A549 (cell line): ENCODE measurements at regions of chr5 and their contacts with region 1.

Region 1: GRCh38 chr5:154647114-154647760 is 107.9 kb upstream of the LARP1 start:
- DNase-seq: no peak
- ATAC-seq: peak in 1 of 2 experiments; percentile 21; a peak in 2 of 6 replicates
- H3K4me3 ChIP-seq: no peak overlapping the region
- H3K27ac ChIP-seq: no peak overlapping the region
- H3K4me1 ChIP-seq: no peaks in the 10 kb centered on the region
- CTCF ChIP-seq: no peak
- EP300 ChIP-seq: no peak
- POLR2A ChIP-seq: no peak
- RAD21 ChIP-seq: no peak

Region 2: DNA sequence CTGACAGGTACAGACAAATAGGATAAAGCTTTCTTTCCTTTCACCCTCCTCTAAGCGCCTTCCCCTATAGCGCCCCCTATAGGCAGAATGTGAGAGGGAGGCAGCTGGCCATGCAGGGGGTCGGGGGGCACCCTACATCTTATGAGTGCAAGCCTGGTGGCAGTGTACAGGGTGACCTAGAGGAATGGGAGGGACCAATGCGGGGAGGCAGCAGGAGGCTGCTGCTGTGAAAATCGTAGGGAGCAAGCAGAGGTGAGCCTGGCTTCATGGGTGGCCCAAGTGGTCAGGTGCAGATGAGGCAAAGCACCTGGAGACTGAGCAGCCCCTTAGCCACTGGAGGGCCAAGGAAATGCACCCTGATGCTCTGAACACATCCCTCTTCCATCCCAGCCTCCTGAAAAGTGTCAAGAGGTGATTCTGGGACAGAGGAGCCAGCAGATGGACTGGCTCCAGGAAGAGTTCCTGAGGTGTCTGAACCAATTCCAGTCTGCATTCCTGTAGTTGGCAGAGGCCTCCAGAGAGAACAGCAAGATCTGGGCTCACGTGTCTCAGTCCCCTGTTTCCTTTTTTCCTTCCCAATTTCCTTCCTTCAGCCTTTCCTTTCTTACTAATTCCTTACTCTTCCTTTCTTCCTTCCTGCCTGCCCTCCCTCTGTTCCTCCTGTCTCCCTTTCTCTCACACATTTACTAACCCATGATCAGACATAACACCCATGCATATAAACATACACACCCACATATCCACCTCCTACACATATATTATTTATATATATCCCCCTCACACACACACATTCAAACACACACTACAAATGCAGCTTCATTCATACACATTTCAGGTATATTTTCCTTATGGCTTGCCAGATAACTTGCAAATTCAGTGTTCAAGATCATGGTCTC is 489.5 kb before region 1 on chr5:
- CTCF ChIA-PET with region 1: no interaction called
- POLR2A ChIA-PET with region 1: no interaction called
- DNase-seq: no peak
- ATAC-seq: peak; percentile 52 to 54; a peak in 5 of 6 replicates
- H3K4me3 ChIP-seq: no peak overlapping the region
- H3K27ac ChIP-seq: no peak overlapping the region
- H3K4me1 ChIP-seq: peaks cover 4% of the 10 kb centered on the region; the same call in 1 of the 3 replicates
- CTCF ChIP-seq: peak; percentile 41
- EP300 ChIP-seq: no peak
- POLR2A ChIP-seq: no peak
- RAD21 ChIP-seq: no peak

Region 3: GRCh38 chr5:154664869-154665268 is 17.6 kb after region 1 on chr5:
- CTCF ChIA-PET with region 1: interaction called, 30 read pairs
- POLR2A ChIA-PET with region 1: no interaction called
- DNase-seq: no peak
- ATAC-seq: no peak
- H3K4me3 ChIP-seq: no peak overlapping the region
- H3K27ac ChIP-seq: no peak overlapping the region
- H3K4me1 ChIP-seq: no peaks in the 10 kb centered on the region
- CTCF ChIP-seq: no peak
- EP300 ChIP-seq: no peak
- POLR2A ChIP-seq: no peak
- RAD21 ChIP-seq: no peak

Region 4: DNA sequence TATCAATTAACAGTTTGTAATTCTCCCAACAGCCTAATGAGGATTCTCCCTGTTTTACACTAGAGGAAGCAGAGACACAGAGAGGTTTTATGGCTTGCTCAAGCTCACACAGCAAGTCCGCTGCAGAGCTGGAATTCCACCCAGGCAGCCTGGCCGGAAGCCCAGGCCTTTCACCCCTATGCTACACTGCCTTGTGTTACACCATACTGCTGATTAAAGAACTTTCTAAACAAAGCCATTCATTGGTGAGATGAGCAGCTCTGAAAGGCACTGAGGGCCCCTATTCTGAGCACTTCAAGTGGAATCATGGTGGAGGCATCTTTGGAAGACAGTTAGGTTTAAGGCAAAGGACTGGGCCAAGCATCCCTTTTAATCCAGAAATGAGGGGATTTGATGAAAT is 93.2 kb after region 1 on chr5:
- CTCF ChIA-PET with region 1: interaction called, 7 read pairs
- POLR2A ChIA-PET with region 1: interaction called, 10 read pairs
- DNase-seq: no peak
- ATAC-seq: no peak
- H3K4me3 ChIP-seq: no peak overlapping the region
- H3K27ac ChIP-seq: no peak overlapping the region
- H3K4me1 ChIP-seq: no peaks in the 10 kb centered on the region
- CTCF ChIP-seq: no peak
- EP300 ChIP-seq: no peak
- POLR2A ChIP-seq: no peak
- RAD21 ChIP-seq: no peak

Region 5: DNA sequence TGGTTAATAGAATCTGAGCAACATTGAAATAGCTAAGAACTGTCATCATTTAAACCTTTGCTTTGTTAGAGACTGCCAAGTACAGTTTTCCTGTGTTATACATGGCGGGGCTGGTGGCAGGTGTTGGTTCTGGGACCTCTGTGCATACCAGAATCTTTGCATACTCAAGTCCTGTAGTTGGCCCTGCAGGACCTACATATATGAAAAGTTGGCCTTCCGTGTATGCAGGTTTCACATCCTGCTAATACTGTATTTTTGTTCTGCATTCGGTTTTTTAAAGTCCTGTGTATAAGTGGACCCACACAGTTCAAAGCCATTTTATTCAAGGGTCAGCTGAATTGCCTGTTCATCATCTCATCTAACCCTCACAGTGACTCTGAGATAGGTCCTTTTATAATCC is 144.3 kb after region 1 on chr5:
- CTCF ChIA-PET with region 1: interaction called, 18 read pairs
- POLR2A ChIA-PET with region 1: no interaction called
- DNase-seq: no peak
- ATAC-seq: no peak
- H3K4me3 ChIP-seq: no peak overlapping the region
- H3K27ac ChIP-seq: no peak overlapping the region
- H3K4me1 ChIP-seq: peaks cover 22% of the 10 kb centered on the region
- CTCF ChIP-seq: no peak
- EP300 ChIP-seq: no peak
- POLR2A ChIP-seq: no peak
- RAD21 ChIP-seq: no peak

Region 6: DNA sequence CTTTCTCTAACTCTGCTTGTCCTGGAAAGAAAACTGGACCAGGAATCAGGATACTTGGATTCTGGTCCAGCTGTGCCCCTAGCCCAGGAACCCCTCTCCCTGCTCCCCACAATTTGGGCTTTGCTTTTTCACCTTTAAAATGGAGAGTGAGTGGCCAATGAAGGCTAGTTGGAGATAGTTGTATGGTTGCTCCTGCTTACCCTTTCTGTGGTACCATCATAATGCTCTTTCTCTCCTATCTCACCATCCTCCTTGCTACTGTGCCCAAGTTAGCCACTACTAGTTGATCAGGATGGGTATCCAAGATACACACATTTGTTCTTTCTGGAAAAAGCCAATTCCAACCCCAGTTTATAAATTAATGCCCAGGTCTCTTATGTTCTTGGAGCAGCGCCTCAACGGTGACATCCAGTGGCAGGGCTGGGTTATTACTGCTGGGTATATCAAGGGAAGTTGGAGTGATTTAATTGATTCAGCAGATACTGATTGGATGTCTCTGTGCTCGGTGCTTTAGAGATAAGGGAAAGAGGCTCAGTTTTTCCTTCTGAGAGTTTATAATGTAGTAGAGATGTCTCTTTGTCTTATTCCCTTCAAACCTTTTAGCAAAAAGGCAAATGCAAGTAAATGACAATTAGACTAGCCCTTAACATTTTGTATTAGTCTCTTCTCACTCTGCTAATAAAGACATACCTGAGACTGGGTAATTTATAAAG is 164.6 kb after region 1 on chr5:
- CTCF ChIA-PET with region 1: interaction called, 20 read pairs
- POLR2A ChIA-PET with region 1: no interaction called
- DNase-seq: peak; percentile 74 to 76
- ATAC-seq: peak; percentile 86 to 87
- H3K4me3 ChIP-seq: no peak overlapping the region
- H3K27ac ChIP-seq: no peak overlapping the region
- H3K4me1 ChIP-seq: peaks cover 8% of the 10 kb centered on the region; the same call in 1 of the 3 replicates
- CTCF ChIP-seq: peak; percentile 89
- EP300 ChIP-seq: no peak
- POLR2A ChIP-seq: no peak
- RAD21 ChIP-seq: peak; percentile 81 to 83

Region 7: DNA sequence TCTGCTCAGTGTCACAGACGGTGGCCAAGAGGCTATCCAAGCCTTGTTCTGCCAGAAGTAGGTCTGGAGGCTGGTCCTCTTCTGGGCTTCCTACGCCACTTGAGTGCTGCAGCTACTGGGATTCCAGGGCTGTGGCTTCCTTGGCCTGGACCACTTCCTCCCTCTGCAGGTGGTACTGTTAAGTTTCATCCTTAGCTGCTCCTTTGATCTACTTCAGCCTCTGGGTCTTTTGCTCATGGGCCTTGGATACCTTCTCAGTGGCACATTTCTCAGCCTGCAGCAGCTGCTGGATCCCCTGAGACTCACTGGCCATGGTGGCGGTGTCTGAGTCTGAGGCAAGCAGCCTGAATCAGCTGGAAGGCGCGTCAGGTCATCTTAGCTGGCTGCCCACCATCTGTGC is 221.5 kb after region 1 on chr5:
- CTCF ChIA-PET with region 1: interaction called, 16 read pairs
- POLR2A ChIA-PET with region 1: interaction called, 4 read pairs
- DNase-seq: peak; percentile 24 to 38
- ATAC-seq: peak; percentile 84 to 91
- H3K4me3 ChIP-seq: no peak overlapping the region
- H3K27ac ChIP-seq: no peak overlapping the region
- H3K4me1 ChIP-seq: peaks cover 12% of the 10 kb centered on the region
- CTCF ChIP-seq: peak; percentile 17; the same call in 1 of the 3 replicates
- EP300 ChIP-seq: no peak
- POLR2A ChIP-seq: no peak
- RAD21 ChIP-seq: peak; percentile 15 to 36; a peak in 1 of 5 replicates